HepG2 (cell line): ENCODE measurements at regions of chr1 and their contacts with region 1.

Region 1: GRCh38 chr1:57612833-57613232 is 189.0 kb upstream of the DAB1 start:
- DNase-seq: no peak
- ATAC-seq: no peak
- H3K4me3 ChIP-seq: no peak overlapping the region
- H3K27ac ChIP-seq: no peak overlapping the region
- H3K4me1 ChIP-seq: no peaks in the 10 kb centered on the region
- H3K27me3 ChIP-seq: no peaks in the 10 kb centered on the region
- CTCF ChIP-seq: no peak
- EP300 ChIP-seq: no peak
- POLR2A ChIP-seq: no peak
- RAD21 ChIP-seq: no peak

Region 2: GRCh38 chr1:57674801-57675200 is 62.0 kb after region 1 on chr1:
- CTCF ChIA-PET with region 1: no interaction called
- POLR2A ChIA-PET with region 1: no interaction called
- in situ Hi-C with region 1: no loop called
- intact Hi-C with region 1: no loop called
- DNase-seq: no peak
- ATAC-seq: no peak
- H3K4me3 ChIP-seq: no peak overlapping the region
- H3K27ac ChIP-seq: no peak overlapping the region
- H3K4me1 ChIP-seq: no peaks in the 10 kb centered on the region
- H3K27me3 ChIP-seq: no peaks in the 10 kb centered on the region
- CTCF ChIP-seq: no peak
- EP300 ChIP-seq: no peak
- POLR2A ChIP-seq: no peak
- RAD21 ChIP-seq: no peak

Region 3: GRCh38 chr1:57736940-57737339 is 124.1 kb after region 1 on chr1:
- CTCF ChIA-PET with region 1: no interaction called
- POLR2A ChIA-PET with region 1: no interaction called
- in situ Hi-C with region 1: no loop called
- intact Hi-C with region 1: loop called (anchors 5 kb)
- DNase-seq: no peak
- ATAC-seq: no peak
- H3K4me3 ChIP-seq: no peak overlapping the region
- H3K27ac ChIP-seq: no peak overlapping the region
- H3K4me1 ChIP-seq: no peaks in the 10 kb centered on the region
- H3K27me3 ChIP-seq: peaks cover 0 to 1% of the 10 kb centered on the region in 2 experiments; a peak in 1 of 5 replicates
- CTCF ChIP-seq: no peak
- EP300 ChIP-seq: no peak
- POLR2A ChIP-seq: no peak
- RAD21 ChIP-seq: no peak